Motor neuron (in vitro differentiated cells): ENCODE measurements at regions of chr12 and their contacts with region 1.

Region 1: DNA sequence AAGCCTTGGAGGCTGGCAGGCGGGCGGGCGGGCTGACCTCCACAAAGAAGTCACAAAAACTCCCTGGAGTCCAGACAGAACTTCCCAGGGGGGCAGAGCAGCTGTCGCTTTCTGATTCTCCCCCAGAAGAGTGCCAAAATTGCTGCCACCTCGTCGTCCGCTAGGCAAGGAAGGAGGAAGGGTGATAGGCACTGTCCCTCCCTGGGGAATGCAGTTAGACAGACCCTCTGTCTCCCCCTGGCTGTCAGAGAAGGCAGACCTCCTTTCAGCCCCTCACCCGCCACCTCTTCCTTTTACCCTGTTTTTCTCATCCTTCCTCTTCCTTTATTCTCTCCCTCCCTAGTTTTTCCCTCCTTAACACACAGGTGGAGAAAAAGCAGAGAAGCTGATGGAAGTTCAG is 18.7 kb downstream of the GRIN2B start:
- ATAC-seq: peak in 1 of 8 experiments; percentile 56
- H3K4me3 ChIP-seq: no peak overlapping the region
- H3K27ac ChIP-seq: no peak overlapping the region
- H3K4me1 ChIP-seq: peaks cover 0 to 9% of the 10 kb centered on the region in 2 donors

Region 2: GRCh38 chr12:13680916-13681315 is 281.8 kb before region 1 on chr12:
- in situ Hi-C with region 1: no loop called
- ATAC-seq: no peak
- H3K4me3 ChIP-seq: no peak overlapping the region
- H3K27ac ChIP-seq: no peak overlapping the region
- H3K4me1 ChIP-seq: peaks cover 5 to 18% of the 10 kb centered on the region in 2 donors

Region 3: GRCh38 chr12:13864081-13864673 is 98.5 kb before region 1 on chr12:
- in situ Hi-C with region 1: loop called in 1 of 9 experiments (anchors 25 kb)
- ATAC-seq: peak; percentile 74 to 95 (median 84)
- H3K4me3 ChIP-seq: no peak overlapping the region
- H3K27ac ChIP-seq: no peak overlapping the region
- H3K4me1 ChIP-seq: peaks cover 0 to 6% of the 10 kb centered on the region in 2 donors